ENCODE measurements at regions of chr14 and their contacts with region 1.

Region 1: GRCh38 chr14:76456200-76456599 is 80.3 kb downstream of the ESRRB start:
- DNase-seq: peak in 1 of 2 experiments; percentile 81
- H3K4me3 ChIP-seq: no peak overlapping the region
- H3K27ac ChIP-seq: no peak overlapping the region
- H3K4me1 ChIP-seq: no peaks in the 10 kb centered on the region; a peak in 1 of 7 replicates
- H3K27me3 ChIP-seq: no peaks in the 10 kb centered on the region
- CTCF ChIP-seq: peak; percentile 51 to 73 (median 58)
- EP300 ChIP-seq: no peak
- POLR2A ChIP-seq: no peak
- RAD21 ChIP-seq: peak; percentile 40 to 62

Region 2: DNA sequence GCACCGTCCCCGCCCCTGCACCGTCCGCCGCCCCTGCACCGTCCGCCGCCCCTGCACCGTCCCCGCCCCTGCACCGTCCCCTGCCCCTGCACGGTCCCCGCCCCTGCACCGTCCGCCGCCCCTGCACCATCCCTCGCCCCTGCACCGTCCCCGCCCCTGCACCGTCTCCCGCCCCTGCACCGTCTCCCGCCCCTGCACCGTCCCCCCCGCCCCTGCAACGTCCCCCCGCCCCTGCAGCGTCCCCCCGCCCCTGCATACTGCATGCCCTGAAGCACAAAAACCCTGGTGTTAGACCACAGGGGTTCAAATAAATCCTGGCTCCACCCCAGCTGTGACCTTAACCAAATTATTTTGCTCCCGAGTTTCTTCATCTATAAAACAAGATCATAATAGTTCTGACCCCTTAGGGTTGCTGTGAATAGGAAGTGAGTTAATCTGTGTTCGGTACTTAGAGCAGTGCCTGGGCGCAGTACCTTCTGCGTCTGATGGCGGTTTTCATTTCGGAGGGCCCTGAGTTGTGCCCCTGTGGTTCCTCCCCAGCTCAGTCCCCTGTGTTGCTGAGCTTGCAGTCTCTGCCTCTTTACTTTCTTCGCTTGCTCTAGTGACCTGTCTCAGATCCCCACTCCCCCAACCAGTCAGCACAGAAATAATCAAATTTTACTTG is 42.1 kb before region 1 on chr14:
- CTCF ChIA-PET with region 1: interaction called, 11 read pairs
- POLR2A ChIA-PET with region 1: no interaction called
- DNase-seq: no peak
- H3K4me3 ChIP-seq: peak overlapping the region; percentile 41 to 69 (median 58); a peak in 7 of 8 replicates
- H3K27ac ChIP-seq: no peak overlapping the region
- H3K4me1 ChIP-seq: peaks cover 0 to 18% (median 8%) of the 10 kb centered on the region in 4 experiments; a peak in 6 of 7 replicates
- H3K27me3 ChIP-seq: no peaks in the 10 kb centered on the region
- CTCF ChIP-seq: no peak
- EP300 ChIP-seq: no peak
- POLR2A ChIP-seq: no peak
- RAD21 ChIP-seq: no peak

Region 3: GRCh38 chr14:76439237-76439775 is 16.9 kb before region 1 on chr14:
- CTCF ChIA-PET with region 1: interaction called, 19 read pairs
- POLR2A ChIA-PET with region 1: no interaction called
- DNase-seq: no peak
- H3K4me3 ChIP-seq: no peak overlapping the region
- H3K27ac ChIP-seq: no peak overlapping the region
- H3K4me1 ChIP-seq: no peaks in the 10 kb centered on the region
- H3K27me3 ChIP-seq: no peaks in the 10 kb centered on the region
- CTCF ChIP-seq: no peak
- EP300 ChIP-seq: no peak
- POLR2A ChIP-seq: no peak
- RAD21 ChIP-seq: no peak

Region 4: GRCh38 chr14:76473481-76474263 is 17.5 kb after region 1 on chr14:
- CTCF ChIA-PET with region 1: interaction called, 45 read pairs
- POLR2A ChIA-PET with region 1: interaction called, 5 read pairs
- DNase-seq: peak in 1 of 2 experiments; percentile 56
- H3K4me3 ChIP-seq: no peak overlapping the region
- H3K27ac ChIP-seq: no peak overlapping the region
- H3K4me1 ChIP-seq: no peaks in the 10 kb centered on the region; a peak in 1 of 7 replicates
- H3K27me3 ChIP-seq: no peaks in the 10 kb centered on the region
- CTCF ChIP-seq: peak; percentile 51 to 57 (median 57)
- EP300 ChIP-seq: no peak
- POLR2A ChIP-seq: no peak
- RAD21 ChIP-seq: peak; percentile 40 to 57

Region 5: DNA sequence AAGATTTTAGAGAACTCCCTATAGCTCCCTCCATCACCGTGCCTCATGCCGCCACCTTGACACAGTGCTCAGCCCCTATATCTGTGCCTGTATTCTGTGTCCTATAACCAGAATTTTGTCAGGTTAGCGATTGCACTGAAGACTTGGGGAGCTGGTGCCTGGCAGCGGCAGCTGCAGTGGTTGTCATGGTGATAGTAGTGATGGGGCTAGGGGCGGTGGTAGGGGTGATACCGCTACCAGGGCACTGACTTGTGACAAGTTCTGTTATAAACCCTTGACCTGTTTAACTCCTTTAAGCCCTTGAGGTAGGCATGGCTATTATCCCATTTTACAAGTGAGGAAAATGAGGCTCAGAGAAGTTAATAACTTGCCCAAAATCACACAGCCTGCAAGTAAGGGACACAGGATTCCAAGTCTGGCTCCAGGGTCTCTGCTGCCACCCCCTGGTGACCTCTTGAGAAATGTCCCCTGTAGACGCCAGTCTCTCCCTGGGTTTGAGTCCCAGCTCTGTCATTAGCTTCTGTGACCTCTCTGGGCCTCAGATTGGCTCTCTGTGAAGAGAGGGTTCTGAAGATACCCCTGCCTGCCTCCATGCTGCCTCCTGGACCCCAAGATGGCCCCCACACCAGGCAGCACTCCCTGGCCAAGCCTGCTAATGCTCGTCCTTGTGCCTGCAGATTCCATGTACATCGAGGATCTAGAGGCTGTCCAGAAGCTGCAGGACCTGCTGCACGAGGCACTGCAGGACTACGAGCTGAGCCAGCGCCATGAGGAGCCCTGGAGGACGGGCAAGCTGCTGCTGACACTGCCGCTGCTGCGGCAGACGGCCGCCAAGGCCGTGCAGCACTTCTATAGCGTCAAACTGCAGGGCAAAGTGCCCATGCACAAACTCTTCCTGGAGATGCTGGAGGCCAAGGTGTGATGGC is 41.6 kb after region 1 on chr14:
- CTCF ChIA-PET with region 1: interaction called, 50 read pairs
- POLR2A ChIA-PET with region 1: no interaction called
- DNase-seq: no peak
- H3K4me3 ChIP-seq: no peak overlapping the region
- H3K27ac ChIP-seq: no peak overlapping the region
- H3K4me1 ChIP-seq: no peaks in the 10 kb centered on the region
- H3K27me3 ChIP-seq: no peaks in the 10 kb centered on the region
- CTCF ChIP-seq: peak; percentile 46 to 51 (median 47)
- EP300 ChIP-seq: no peak
- POLR2A ChIP-seq: no peak
- RAD21 ChIP-seq: peak; percentile 67 to 73

Region 6: DNA sequence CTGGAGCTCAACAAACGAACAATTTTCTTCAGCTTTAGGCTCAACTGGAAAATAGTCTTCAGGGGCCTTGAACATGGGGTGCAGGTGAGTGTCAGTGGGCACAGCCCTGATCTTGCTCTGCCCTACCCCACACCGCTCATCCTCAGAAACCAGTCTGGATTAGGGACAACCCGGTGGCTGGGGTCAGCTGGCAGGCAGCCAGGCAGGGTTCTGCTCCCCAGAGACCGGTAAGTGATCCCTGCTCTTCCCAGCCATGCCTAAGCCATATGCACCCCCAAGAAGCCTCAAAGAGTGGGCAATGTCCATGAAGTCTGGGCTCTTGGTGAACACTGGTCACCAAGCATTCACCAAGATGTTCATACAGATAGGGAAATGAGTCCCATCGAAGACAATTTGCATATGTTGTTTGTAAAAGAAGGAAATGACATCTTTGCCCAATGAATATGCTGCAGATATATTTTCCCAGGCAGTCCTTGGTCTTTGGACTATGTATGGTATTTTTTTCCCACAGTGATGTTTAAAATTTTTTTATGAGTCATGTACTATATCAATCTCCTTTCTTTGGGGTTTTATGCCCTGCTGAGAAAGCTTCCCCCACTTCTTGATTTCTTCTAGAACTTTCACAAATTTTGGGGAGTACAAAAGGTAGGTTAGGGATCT is 241.2 kb after region 1 on chr14:
- CTCF ChIA-PET with region 1: no interaction called
- POLR2A ChIA-PET with region 1: no interaction called
- DNase-seq: peak in 1 of 2 experiments; percentile 32
- H3K4me3 ChIP-seq: no peak overlapping the region
- H3K27ac ChIP-seq: no peak overlapping the region
- H3K4me1 ChIP-seq: no peaks in the 10 kb centered on the region
- H3K27me3 ChIP-seq: no peaks in the 10 kb centered on the region
- CTCF ChIP-seq: no peak
- EP300 ChIP-seq: no peak
- POLR2A ChIP-seq: no peak
- RAD21 ChIP-seq: no peak

Measured in H1 (cell line).